GM18951 (cell line): ENCODE measurements at regions of chr12 and their contacts with region 1.

Region 1: GRCh38 chr12:111396726-111397445 is 8.8 kb upstream of the SH2B3 start:
- POLR2A ChIP-seq: no peak

Region 2: DNA sequence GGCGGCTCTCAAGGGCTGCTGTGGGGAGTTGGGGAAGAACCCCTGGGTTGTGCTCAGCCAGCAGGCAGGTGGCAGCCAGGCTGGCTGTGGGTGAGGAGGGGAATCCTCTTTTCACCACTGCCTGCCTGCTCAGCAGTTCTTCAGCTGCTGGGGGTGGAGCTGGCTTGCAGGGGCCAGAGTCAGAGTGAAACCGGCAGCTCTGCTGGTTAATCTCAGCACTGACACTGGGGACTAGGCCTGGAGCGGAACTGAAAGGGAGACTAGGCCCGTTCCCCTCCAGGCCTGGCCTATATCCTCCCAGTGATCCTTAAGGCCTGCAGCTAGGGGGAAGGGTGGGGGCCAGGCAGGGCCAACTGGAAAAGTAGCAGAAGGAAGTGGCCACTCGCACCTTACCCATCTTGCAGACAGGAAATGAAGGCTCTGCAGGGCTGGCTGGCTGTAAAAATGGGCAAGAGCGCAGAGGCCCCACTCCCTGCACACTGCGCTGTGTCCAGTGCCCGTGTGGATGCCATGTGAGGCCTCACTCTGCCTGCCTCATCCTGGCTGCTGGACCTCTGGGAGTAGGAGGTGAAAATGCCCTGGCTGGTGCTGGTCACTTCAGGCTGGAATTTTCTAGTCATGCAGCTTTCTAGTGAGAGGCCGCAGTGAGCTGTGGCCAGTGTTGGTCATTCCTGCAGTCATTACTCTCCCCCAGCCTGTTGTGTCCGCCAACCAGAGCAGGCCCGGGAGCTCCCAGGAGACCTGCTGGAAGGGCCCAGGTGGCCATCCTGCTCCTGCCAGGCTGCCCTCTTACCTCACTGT is 48.2 kb after region 1 on chr12:
- in situ Hi-C with region 1: loop called (anchors 5 kb)
- POLR2A ChIP-seq: peak; percentile 36

Region 3: GRCh38 chr12:111636209-111636945 is 239.5 kb after region 1 on chr12:
- in situ Hi-C with region 1: no loop called
- POLR2A ChIP-seq: no peak